IMR-90 (cell line): ENCODE measurements at regions of chr1 and their contacts with region 1.

Region 1: GRCh38 chr1:37602750-37603694 is 7.3 kb upstream of the GNL2 start:
- DNase-seq: peak; percentile 16
- ATAC-seq: peak; percentile 70; the same call in 1 of the 2 replicates
- H3K4me3 ChIP-seq: no peak overlapping the region
- H3K27ac ChIP-seq: no peak overlapping the region
- H3K4me1 ChIP-seq: peaks cover 3% of the 10 kb centered on the region; the same call in 1 of the 2 replicates
- H3K27me3 ChIP-seq: peaks cover 26% of the 10 kb centered on the region
- CTCF ChIP-seq: peak; percentile 62
- POLR2A ChIP-seq: no peak
- RAD21 ChIP-seq: peak; percentile 48

Region 2: DNA sequence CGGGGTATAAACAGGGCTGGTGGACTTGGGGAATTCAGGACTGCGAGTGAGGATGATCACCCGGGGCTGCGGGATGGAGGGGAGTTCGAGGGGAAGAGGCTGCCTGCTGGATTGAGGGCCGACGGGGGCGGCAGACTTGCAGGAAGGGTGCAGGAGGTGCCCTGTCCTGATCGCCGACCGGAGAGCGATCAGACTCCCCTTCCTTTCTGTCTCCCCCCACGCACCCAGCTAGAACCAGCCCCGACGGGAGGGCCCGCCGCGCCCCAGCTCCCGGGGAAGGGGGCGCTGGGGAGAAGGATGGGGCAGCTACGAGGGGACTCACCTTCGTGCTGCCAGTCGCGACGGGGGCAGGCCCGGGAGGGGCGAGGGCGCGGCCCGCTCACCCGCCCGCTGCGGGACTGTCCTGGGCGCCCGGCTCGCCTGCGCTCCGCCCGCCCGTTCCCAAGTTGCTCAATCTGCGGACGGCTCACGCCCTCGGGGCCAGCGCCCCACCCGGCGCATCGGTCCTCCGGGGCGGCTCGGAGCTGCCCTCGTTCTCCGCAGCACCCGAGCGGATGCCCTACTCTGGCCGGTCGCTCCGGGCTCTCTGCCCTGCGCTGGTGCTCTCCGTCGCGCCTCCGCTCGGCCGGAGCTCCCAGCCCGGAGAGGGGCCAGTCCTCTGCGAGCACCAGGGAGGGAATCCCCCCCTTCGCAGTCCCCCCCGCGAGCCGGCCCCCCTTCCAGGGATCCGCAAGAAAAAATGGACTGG is 31.4 kb after region 1 on chr1 and contains the start of gene RSPO1:
- CTCF ChIA-PET with region 1: interaction called, 3 read pairs
- POLR2A ChIA-PET with region 1: interaction called, 3 read pairs
- dilution Hi-C with region 1: no loop called
- in situ Hi-C with region 1: no loop called
- intact Hi-C with region 1: loop called (anchors 2 kb)
- DNase-seq: no peak
- ATAC-seq: peak; percentile 67
- H3K4me3 ChIP-seq: peak within 1 kb of the TSS; percentile 32; the same call in 1 of the 2 replicates
- H3K27ac ChIP-seq: no peak within 1 kb of the TSS
- H3K4me1 ChIP-seq: no peaks in the 10 kb centered on the region
- H3K27me3 ChIP-seq: peaks cover 84% of the 10 kb centered on the region
- CTCF ChIP-seq: no peak
- POLR2A ChIP-seq: no peak
- RAD21 ChIP-seq: no peak
- total RNA-seq, gene RSPO1: not detected in 2 replicates

Region 3: DNA sequence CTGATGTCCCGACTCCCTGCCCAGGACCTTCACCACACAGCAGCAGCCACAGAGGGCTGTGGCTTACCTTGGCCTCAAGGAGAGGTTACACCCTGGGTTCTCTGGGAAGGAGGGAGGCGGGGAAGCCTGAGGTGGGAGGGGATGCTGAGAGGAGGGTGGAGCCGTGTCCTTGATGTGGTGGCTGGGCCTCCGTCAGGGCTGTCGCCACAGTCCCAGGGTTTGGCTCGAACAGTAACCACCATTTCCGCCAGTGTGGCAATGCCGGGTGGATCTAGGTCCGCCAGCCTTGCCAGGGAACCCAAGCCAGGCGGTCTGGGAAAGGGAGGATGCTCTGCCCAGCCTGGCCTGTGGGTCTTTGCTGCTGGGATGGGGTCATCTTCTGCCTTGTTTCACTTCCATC is 70.9 kb after region 1 on chr1:
- CTCF ChIA-PET with region 1: interaction called, 3 read pairs
- POLR2A ChIA-PET with region 1: no interaction called
- dilution Hi-C with region 1: no loop called
- in situ Hi-C with region 1: loop called (anchors 5 kb)
- intact Hi-C with region 1: no loop called
- DNase-seq: no peak
- ATAC-seq: no peak
- H3K4me3 ChIP-seq: no peak overlapping the region
- H3K27ac ChIP-seq: no peak overlapping the region
- H3K4me1 ChIP-seq: no peaks in the 10 kb centered on the region
- H3K27me3 ChIP-seq: peaks cover 49% of the 10 kb centered on the region
- CTCF ChIP-seq: no peak
- POLR2A ChIP-seq: no peak
- RAD21 ChIP-seq: no peak

Region 4: GRCh38 chr1:38818175-38818976 is 1215.4 kb after region 1 on chr1:
- CTCF ChIA-PET with region 1: no interaction called
- POLR2A ChIA-PET with region 1: no interaction called
- dilution Hi-C with region 1: no loop called
- in situ Hi-C with region 1: loop called (anchors 25 kb)
- intact Hi-C with region 1: no loop called
- DNase-seq: no peak
- ATAC-seq: peak; percentile 87
- H3K4me3 ChIP-seq: no peak overlapping the region
- H3K27ac ChIP-seq: no peak overlapping the region
- H3K4me1 ChIP-seq: no peaks in the 10 kb centered on the region; the same call in 1 of the 2 replicates
- H3K27me3 ChIP-seq: peaks cover 81% of the 10 kb centered on the region
- CTCF ChIP-seq: peak; percentile 66
- POLR2A ChIP-seq: no peak
- RAD21 ChIP-seq: peak; percentile 66